GM23248 (cell line): ENCODE measurements at regions of chr10 and their contacts with region 1.

Region 1: GRCh38 chr10:63157845-63158624 is 24.9 kb downstream of the NRBF2 start:
- DNase-seq: peak; percentile 90
- H3K4me3 ChIP-seq: no peak overlapping the region
- H3K27ac ChIP-seq: 0 out of 2 replicates have a peak overlapping the region, but pooled peaks have one; percentile 1
- H3K4me1 ChIP-seq: peaks cover 17% of the 10 kb centered on the region
- H3K27me3 ChIP-seq: no peaks in the 10 kb centered on the region

Region 2: GRCh38 chr10:62594093-62594520 is 563.9 kb before region 1 on chr10:
- in situ Hi-C with region 1: loop called (anchors 10 kb)
- DNase-seq: peak; percentile 73
- H3K4me3 ChIP-seq: no peak overlapping the region
- H3K27ac ChIP-seq: no peak overlapping the region
- H3K4me1 ChIP-seq: peaks cover 35% of the 10 kb centered on the region
- H3K27me3 ChIP-seq: no peaks in the 10 kb centered on the region

Region 3: GRCh38 chr10:63003816-63004453 is 154.1 kb before region 1 on chr10:
- in situ Hi-C with region 1: loop called (anchors 10 kb)
- DNase-seq: peak; percentile 38
- H3K4me3 ChIP-seq: no peak overlapping the region
- H3K27ac ChIP-seq: no peak overlapping the region
- H3K4me1 ChIP-seq: peaks cover 10% of the 10 kb centered on the region
- H3K27me3 ChIP-seq: no peaks in the 10 kb centered on the region